ENCODE measurements at regions of chr16 and their contacts with region 1.

Region 1: GRCh38 chr16:12067714-12068401 is 91.3 kb downstream of the SNX29 start:
- DNase-seq: peak; percentile 46
- H3K4me3 ChIP-seq: no peak overlapping the region
- CTCF ChIP-seq: peak; percentile 81

Region 2: DNA sequence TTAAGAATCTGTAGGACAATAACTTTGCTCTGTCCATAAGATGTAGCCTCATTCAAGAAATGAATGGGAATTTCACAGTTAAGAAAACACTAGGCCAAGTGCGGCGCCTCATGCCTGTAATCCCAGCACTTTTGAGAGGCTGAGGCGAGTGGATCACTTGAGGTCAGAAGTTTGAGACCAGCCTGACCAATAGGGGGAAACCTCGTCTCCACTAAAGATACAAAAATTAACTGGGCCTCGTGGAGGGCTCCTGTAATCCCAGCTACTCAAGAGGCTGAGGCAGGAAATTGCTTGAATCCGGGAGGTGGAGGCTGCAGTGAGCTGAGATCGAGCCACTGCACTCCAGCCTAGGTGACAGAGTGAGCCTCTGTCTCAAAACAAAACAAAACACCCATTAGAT is 196.7 kb before region 1 on chr16:
- CTCF ChIA-PET with region 1: interaction called, 19 read pairs
- POLR2A ChIA-PET with region 1: no interaction called
- DNase-seq: no peak
- H3K4me3 ChIP-seq: no peak overlapping the region
- CTCF ChIP-seq: no peak

Region 3: GRCh38 chr16:11896777-11897176 is 171.1 kb before region 1 on chr16:
- CTCF ChIA-PET with region 1: interaction called, 20 read pairs
- POLR2A ChIA-PET with region 1: no interaction called
- DNase-seq: peak; percentile 68
- H3K4me3 ChIP-seq: no peak overlapping the region
- CTCF ChIP-seq: no peak

Region 4: GRCh38 chr16:11915644-11916523 is 152.0 kb before region 1 on chr16 and contains the start of gene GSPT1:
- CTCF ChIA-PET with region 1: interaction called, 11 read pairs
- POLR2A ChIA-PET with region 1: no interaction called
- DNase-seq: peak; percentile 83
- H3K4me3 ChIP-seq: peak within 1 kb of the TSS; percentile 89
- CTCF ChIP-seq: no peak

Region 5: GRCh38 chr16:11957591-11958395 is 110.1 kb before region 1 on chr16:
- CTCF ChIA-PET with region 1: interaction called, 13 read pairs
- POLR2A ChIA-PET with region 1: no interaction called
- DNase-seq: no peak
- H3K4me3 ChIP-seq: no peak overlapping the region
- CTCF ChIP-seq: no peak

Region 6: GRCh38 chr16:11972128-11972527 is 95.7 kb before region 1 on chr16:
- CTCF ChIA-PET with region 1: interaction called, 21 read pairs
- POLR2A ChIA-PET with region 1: interaction called, 9 read pairs
- DNase-seq: no peak
- H3K4me3 ChIP-seq: no peak overlapping the region
- CTCF ChIP-seq: no peak

Region 7: DNA sequence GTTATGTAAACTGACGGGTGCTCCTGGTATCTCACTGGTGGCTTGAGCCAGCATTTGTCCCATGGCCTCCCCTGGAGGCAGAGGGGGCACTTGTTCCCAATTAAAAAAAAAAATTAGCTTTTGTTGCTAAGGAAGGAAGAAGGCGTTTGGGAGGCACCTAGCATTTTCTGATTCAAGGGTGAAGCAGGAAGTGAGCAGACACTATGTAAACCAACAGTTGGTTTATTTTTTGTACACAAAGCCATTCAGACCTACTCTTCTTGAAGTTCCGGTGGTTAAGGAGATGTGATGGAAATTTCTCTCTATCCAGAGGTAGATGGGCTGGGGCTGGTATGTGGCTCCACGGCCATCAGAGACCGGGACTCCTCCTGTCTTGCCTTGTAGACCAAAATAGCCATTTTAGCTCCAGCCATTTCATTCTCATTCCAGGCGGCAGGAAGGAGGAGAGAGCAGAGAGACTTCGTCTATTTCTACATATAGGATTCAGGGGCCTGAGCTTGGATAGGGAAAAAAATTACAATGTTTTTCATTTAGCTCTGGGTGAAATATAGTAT is 11.6 kb after region 1 on chr16:
- CTCF ChIA-PET with region 1: interaction called, 22 read pairs
- POLR2A ChIA-PET with region 1: no interaction called
- DNase-seq: no peak
- H3K4me3 ChIP-seq: no peak overlapping the region
- CTCF ChIP-seq: no peak

Region 8: GRCh38 chr16:12398029-12398682 is 330.3 kb after region 1 on chr16:
- CTCF ChIA-PET with region 1: no interaction called
- POLR2A ChIA-PET with region 1: no interaction called
- DNase-seq: no peak
- H3K4me3 ChIP-seq: no peak overlapping the region
- CTCF ChIP-seq: no peak